ENCODE measurements at regions of chr6 and their contacts with region 1.

Region 1: DNA sequence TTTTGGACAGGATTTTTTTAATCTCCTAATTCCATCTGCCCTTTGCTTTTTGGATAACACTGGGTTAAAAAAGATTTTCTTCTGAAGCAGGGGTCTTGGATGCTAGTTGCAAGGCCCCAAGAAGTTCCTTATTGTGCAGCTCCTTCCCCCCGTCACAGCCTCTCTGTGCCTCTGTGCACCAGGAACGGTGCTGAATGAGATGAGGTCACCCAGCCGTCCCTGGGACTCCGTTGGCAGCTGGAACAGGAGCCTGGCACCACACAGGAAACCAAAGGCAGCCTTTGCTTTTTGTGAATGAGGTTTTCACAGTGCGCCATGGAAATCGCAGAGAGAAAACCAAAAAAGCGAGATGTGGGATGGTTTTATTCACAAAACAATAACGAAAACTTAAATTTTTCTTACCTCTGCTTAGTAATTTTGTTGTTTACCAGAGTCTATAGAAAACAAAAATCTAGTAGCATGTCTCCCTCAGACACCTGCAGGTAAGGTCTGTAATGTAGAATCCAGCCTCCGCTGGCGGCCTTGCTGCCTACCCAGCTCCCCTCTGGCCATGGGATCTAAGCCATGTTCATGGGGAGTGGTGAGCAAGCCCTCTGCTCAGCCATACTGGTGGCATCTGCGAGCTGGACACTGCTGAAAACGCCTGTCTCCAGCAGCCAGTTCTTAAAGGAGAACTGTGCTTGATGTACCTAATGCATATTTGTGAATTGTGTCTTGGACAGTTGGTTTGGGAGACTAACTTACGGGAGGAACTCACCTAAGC is 40.4 kb upstream of the SYNJ2 start:
- DNase-seq: no peak
- H3K4me3 Mint-ChIP-seq: no peak overlapping the region
- H3K27ac Mint-ChIP-seq: no peak overlapping the region
- H3K4me1 Mint-ChIP-seq: peaks cover 26% of the 10 kb centered on the region
- H3K27me3 Mint-ChIP-seq: no peaks in the 10 kb centered on the region

Region 2: DNA sequence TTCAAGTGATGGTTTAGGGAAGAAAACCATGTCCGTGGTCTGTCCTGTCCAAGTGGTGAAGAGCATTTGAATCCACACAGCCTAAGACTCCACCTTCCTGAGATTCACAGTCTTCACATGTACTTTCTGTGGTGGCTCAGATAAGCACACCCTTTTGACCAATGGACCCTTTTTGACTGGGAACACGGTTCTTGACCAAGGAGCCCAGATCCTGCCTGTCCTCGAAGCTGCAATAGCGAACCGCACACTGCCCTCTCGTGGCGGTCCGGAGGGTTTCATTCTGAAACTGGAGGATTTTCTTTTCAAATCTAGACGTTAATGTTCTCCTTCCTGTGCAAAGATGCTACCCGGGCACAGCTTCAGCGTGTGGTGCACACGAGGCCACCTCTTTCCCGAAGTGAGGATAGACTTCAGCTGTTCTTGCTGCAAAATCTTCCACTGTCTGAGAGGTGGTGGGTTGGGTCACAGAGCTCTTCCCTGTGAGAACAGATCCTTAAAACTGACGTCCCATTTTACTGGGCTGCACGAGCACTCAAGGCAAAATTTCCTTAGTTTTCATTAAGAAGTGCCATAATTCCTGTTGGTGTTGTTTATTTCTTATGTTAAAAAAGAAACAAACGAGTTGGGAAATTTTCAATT is 130.9 kb after region 1 on chr6:
- intact Hi-C with region 1: loop called (anchors 2 kb)
- DNase-seq: peak; percentile 60
- H3K4me3 Mint-ChIP-seq: no peak overlapping the region
- H3K27ac Mint-ChIP-seq: peak overlapping the region; percentile 70
- H3K4me1 Mint-ChIP-seq: peaks cover 55% of the 10 kb centered on the region
- H3K27me3 Mint-ChIP-seq: no peaks in the 10 kb centered on the region

Measured in activated T-helper 1 cell treated with anti-CD3 and anti-CD28 coated beads, Interleukin-12 subunit alpha, Interleukin-12 subunit beta, Interleukin-2, Interleukin-4 antibody, amounts not matched to agents 30 ng/mL and 10 ng/mL and 1 ng/mL, durations not matched to agents 14 hours and 24 hours and 36 hours (primary cell).